ENCODE measurements at regions of chr19 and their contacts with region 1.

Region 1: DNA sequence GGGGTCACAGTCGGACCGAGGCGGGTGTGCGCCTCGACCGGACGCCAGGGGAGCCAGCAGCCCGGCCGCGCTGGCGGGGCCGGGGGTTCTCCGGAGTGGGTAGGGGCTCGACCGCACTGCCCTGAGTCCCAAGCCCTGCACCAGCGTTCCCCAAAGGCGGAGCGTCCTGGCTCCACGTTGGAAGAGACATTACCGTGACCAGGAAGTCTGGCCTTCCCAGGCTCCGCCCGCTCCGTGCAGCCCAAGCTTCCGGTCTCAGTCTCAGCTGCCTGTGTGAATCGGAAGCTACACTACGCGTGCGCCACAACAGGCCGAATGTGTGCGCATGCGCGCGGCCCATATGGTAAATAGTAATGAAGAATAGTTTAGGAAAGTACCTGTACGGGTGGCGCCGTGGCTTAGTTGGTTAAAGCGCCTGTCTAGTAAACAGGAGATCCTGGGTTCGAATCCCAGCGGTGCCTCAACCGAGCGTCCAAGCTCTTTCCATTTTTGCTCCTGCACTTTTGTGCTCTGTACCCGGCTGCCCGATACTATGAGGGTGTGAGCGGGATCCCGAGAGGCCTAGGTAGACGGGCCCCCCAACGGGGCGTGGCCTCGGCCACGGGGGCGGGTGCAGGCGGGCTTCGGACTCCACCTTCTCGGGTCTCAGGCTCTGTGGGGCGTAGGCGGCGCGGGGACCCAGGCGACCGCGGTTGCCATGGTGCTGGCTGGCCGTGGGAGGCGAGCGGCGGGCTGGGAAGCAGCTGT is 17.3 kb upstream of the LRP3 start:
- DNase-seq: peak; percentile 93 to 97
- ATAC-seq: peak; percentile 71 to 88 (median 74)
- H3K4me3 ChIP-seq: peak overlapping the region; percentile 85
- H3K4me3 Mint-ChIP-seq: peak overlapping the region; percentile 100
- H3K27ac ChIP-seq: peak overlapping the region; percentile 86
- H3K27ac Mint-ChIP-seq: peak overlapping the region; percentile 100
- H3K4me1 ChIP-seq: peaks cover 39% of the 10 kb centered on the region
- H3K4me1 Mint-ChIP-seq: peaks cover 48 to 57% of the 10 kb centered on the region in 2 donors
- H3K27me3 ChIP-seq: no peaks in the 10 kb centered on the region
- H3K27me3 Mint-ChIP-seq: peaks cover 5 to 6% of the 10 kb centered on the region in 2 donors
- CTCF ChIP-seq: no peak

Region 2: GRCh38 chr19:33080761-33081681 is 95.8 kb before region 1 on chr19 and contains the start of gene GPATCH1:
- intact Hi-C with region 1: loop called (anchors 2 kb)
- DNase-seq: peak; percentile 85 to 89
- ATAC-seq: peak; percentile 95 to 97 (median 97)
- H3K4me3 ChIP-seq: peak within 1 kb of the TSS; percentile 73
- H3K4me3 Mint-ChIP-seq: peak within 1 kb of the TSS; percentile 100
- H3K27ac ChIP-seq: peak within 1 kb of the TSS; percentile 61
- H3K27ac Mint-ChIP-seq: peak within 1 kb of the TSS; percentile 92
- H3K4me1 ChIP-seq: peaks cover 18% of the 10 kb centered on the region
- H3K4me1 Mint-ChIP-seq: peaks cover 17 to 30% of the 10 kb centered on the region in 2 donors
- H3K27me3 ChIP-seq: no peaks in the 10 kb centered on the region
- H3K27me3 Mint-ChIP-seq: no peaks in the 10 kb centered on the region
- CTCF ChIP-seq: no peak
- total RNA-seq, gene GPATCH1: 9.1 to 15.0 (median 12.7) TPM

Region 3: DNA sequence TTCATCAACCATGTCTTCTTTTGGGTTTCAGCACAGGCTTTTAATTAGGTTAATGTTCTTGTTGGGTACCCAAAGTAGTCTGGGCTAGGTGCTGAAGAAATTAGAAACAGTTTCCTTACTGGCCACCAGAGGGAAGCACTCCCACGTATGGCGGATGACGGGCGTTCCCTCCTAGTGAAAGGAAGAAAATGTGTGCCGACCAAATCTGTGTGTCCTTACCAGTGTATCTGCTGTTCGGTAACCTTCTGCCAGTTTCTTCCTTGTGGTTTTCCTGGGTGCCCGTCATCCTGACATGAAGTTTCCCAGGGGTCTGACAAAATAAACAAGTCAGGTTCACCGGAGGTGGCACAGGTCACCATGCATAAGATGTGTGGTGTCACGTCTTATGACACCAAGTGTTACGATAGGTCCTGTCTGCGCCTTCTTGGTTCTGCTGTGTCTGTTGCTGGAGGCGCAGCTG is 50.9 kb before region 1 on chr19:
- intact Hi-C with region 1: loop called (anchors 5 kb)
- DNase-seq: peak; percentile 30 to 84
- ATAC-seq: peak; percentile 81 to 97 (median 93)
- H3K4me3 ChIP-seq: no peak overlapping the region
- H3K4me3 Mint-ChIP-seq: no peak overlapping the region
- H3K27ac ChIP-seq: no peak overlapping the region
- H3K27ac Mint-ChIP-seq: no peak overlapping the region
- H3K4me1 ChIP-seq: peaks cover 4% of the 10 kb centered on the region
- H3K4me1 Mint-ChIP-seq: peaks cover 0 to 11% of the 10 kb centered on the region in 2 donors
- H3K27me3 ChIP-seq: no peaks in the 10 kb centered on the region
- H3K27me3 Mint-ChIP-seq: no peaks in the 10 kb centered on the region
- CTCF ChIP-seq: peak; percentile 87

Region 4: GRCh38 chr19:33373701-33374421 is 197.0 kb after region 1 on chr19 and contains the start of gene CEBPG:
- intact Hi-C with region 1: loop called (anchors 1 kb)
- DNase-seq: peak; percentile 65 to 83
- ATAC-seq: peak; percentile 48 to 59 (median 55)
- H3K4me3 ChIP-seq: peak within 1 kb of the TSS; percentile 86
- H3K4me3 Mint-ChIP-seq: peak within 1 kb of the TSS; percentile 88
- H3K27ac ChIP-seq: peak within 1 kb of the TSS; percentile 92
- H3K27ac Mint-ChIP-seq: peak within 1 kb of the TSS; percentile 86 to 97
- H3K4me1 ChIP-seq: peaks cover 25% of the 10 kb centered on the region
- H3K4me1 Mint-ChIP-seq: peaks cover 45 to 48% of the 10 kb centered on the region in 2 donors
- H3K27me3 ChIP-seq: no peaks in the 10 kb centered on the region
- H3K27me3 Mint-ChIP-seq: no peaks in the 10 kb centered on the region
- CTCF ChIP-seq: no peak
- total RNA-seq, gene CEBPG: 22.3 to 28.1 (median 23.9) TPM